ENCODE measurements at regions of chr12 and their contacts with region 1.

Region 1: GRCh38 chr12:19779393-19780056 is 340.2 kb downstream of the AEBP2 start:
- DNase-seq: peak in 4 of 5 donors; percentile 44 to 71 (median 54)
- ATAC-seq: peak; percentile 84 to 92 (median 88)
- H3K4me3 ChIP-seq: no peak overlapping the region
- H3K27ac ChIP-seq: peak overlapping the region in 9 of 12 donors; percentile 16 to 52 (median 38)
- H3K4me1 ChIP-seq: peaks cover 0 to 16% (median 9%) of the 10 kb centered on the region in 12 donors
- H3K27me3 ChIP-seq: no peaks in the 10 kb centered on the region
- CTCF ChIP-seq: peak in 7 of 12 donors; percentile 9 to 56 (median 19)
- POLR2A ChIP-seq: no peak

Region 2: GRCh38 chr12:19833775-19834501 is 54.4 kb after region 1 on chr12:
- intact Hi-C with region 1: loop called in 1 of 10 experiments (anchors 10 kb)
- DNase-seq: no peak
- ATAC-seq: peak in 2 of 4 donors; percentile 18 to 46
- H3K4me3 ChIP-seq: no peak overlapping the region
- H3K27ac ChIP-seq: peak overlapping the region in 1 of 12 donors; percentile 6
- H3K4me1 ChIP-seq: peaks cover 0 to 3% (median 0%) of the 10 kb centered on the region in 12 donors
- H3K27me3 ChIP-seq: no peaks in the 10 kb centered on the region
- CTCF ChIP-seq: no peak
- POLR2A ChIP-seq: no peak

Region 3: GRCh38 chr12:19885092-19885812 is 105.7 kb after region 1 on chr12:
- intact Hi-C with region 1: loop called in 6 of 10 experiments (anchors 5 to 10 kb)
- DNase-seq: no peak
- ATAC-seq: peak in 3 of 4 donors; percentile 43 to 66 (median 50)
- H3K4me3 ChIP-seq: no peak overlapping the region
- H3K27ac ChIP-seq: peak overlapping the region in 8 of 12 donors; percentile 0 to 69 (median 40)
- H3K4me1 ChIP-seq: peaks cover 0 to 45% (median 15%) of the 10 kb centered on the region in 12 donors
- H3K27me3 ChIP-seq: no peaks in the 10 kb centered on the region
- CTCF ChIP-seq: no peak
- POLR2A ChIP-seq: no peak